ENCODE measurements at regions of chr10 and their contacts with region 1.

Region 1: GRCh38 chr10:4849555-4850242 is 23.7 kb downstream of the AKR1E2 start:
- DNase-seq: peak; percentile 75 to 87 (median 80)
- H3K4me3 ChIP-seq: no peak overlapping the region
- H3K4me3 Mint-ChIP-seq: peak overlapping the region in 4 of 8 donors; percentile 7 to 46 (median 26)
- H3K27ac ChIP-seq: no peak overlapping the region
- H3K27ac Mint-ChIP-seq: peak overlapping the region in 5 of 7 donors; percentile 10 to 84 (median 63)
- H3K4me1 ChIP-seq: peaks cover 4% of the 10 kb centered on the region
- H3K4me1 Mint-ChIP-seq: peaks cover 6 to 9% (median 8%) of the 10 kb centered on the region in 4 donors
- H3K27me3 ChIP-seq: no peaks in the 10 kb centered on the region
- H3K27me3 Mint-ChIP-seq: peaks cover 0 to 2% of the 10 kb centered on the region in 2 donors

Region 2: GRCh38 chr10:4820804-4821401 is 28.8 kb before region 1 on chr10:
- CTCF ChIA-PET with region 1: interaction called, 62 read pairs
- POLR2A ChIA-PET with region 1: interaction called, 3 read pairs
- intact Hi-C with region 1: no loop called
- DNase-seq: no peak
- H3K4me3 ChIP-seq: no peak overlapping the region
- H3K4me3 Mint-ChIP-seq: no peak overlapping the region
- H3K27ac ChIP-seq: no peak overlapping the region
- H3K27ac Mint-ChIP-seq: no peak overlapping the region
- H3K4me1 ChIP-seq: no peaks in the 10 kb centered on the region
- H3K4me1 Mint-ChIP-seq: peaks cover 2 to 4% (median 2%) of the 10 kb centered on the region in 4 donors
- H3K27me3 ChIP-seq: no peaks in the 10 kb centered on the region
- H3K27me3 Mint-ChIP-seq: peaks cover 5 to 24% of the 10 kb centered on the region in 2 donors

Region 3: GRCh38 chr10:4865945-4866661 is 16.4 kb after region 1 on chr10:
- CTCF ChIA-PET with region 1: interaction called, 13 read pairs
- POLR2A ChIA-PET with region 1: no interaction called
- intact Hi-C with region 1: no loop called
- DNase-seq: no peak
- H3K4me3 ChIP-seq: no peak overlapping the region
- H3K4me3 Mint-ChIP-seq: peak overlapping the region in 2 of 8 donors; percentile 15 to 28
- H3K27ac ChIP-seq: no peak overlapping the region
- H3K27ac Mint-ChIP-seq: peak overlapping the region in 1 of 7 donors; percentile 33
- H3K4me1 ChIP-seq: no peaks in the 10 kb centered on the region
- H3K4me1 Mint-ChIP-seq: peaks cover 0 to 6% (median under 1%) of the 10 kb centered on the region in 4 donors
- H3K27me3 ChIP-seq: no peaks in the 10 kb centered on the region
- H3K27me3 Mint-ChIP-seq: peaks cover 0 to 5% of the 10 kb centered on the region in 2 donors

Region 4: DNA sequence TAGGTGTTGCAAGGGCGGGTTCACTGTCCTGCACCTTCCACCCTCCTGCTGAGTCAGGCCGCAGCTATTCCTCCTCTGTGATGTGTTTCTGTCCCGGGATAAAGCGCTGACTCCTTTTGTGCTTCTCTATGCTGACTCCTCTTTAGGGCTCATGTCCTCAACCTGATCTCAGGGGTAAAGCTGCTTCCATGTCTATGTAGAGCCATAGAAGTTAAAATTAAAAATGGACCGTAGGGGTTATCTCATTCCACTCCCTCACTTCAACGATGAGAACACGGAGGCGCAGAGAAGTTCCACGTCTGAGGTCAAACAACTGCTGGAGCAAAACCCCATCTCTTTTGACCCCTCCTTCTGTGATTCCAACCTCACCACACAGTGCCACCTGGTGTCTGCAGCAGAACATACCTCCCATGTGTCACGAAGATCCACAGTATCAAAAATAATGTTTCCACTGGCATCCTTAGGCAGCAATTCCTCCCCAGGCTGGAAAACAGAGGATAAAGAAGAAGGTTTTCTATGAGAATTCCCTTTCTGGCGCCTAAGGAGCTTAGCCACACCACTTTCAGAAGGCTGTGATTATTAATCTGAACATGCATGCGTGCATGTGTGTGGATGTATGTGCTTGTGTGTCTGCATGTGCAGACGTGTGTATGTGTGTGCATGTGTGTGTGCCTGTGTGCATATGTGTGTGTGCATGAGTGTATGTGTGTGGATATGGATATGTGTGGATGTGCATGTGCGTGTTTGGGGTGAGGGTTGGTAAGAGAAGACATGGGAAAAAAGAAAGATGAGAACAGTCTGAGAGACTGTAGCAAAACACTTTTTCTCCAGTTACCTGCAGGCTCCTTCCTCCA is 433.8 kb after region 1 on chr10:
- CTCF ChIA-PET with region 1: interaction called, 59 read pairs
- POLR2A ChIA-PET with region 1: interaction called, 3 read pairs
- intact Hi-C with region 1: loop called (anchors 1 kb)
- DNase-seq: peak; percentile 47 to 64 (median 50)
- H3K4me3 ChIP-seq: no peak overlapping the region
- H3K4me3 Mint-ChIP-seq: peak overlapping the region in 5 of 8 donors; percentile 37 to 68 (median 50)
- H3K27ac ChIP-seq: peak overlapping the region; percentile 23
- H3K27ac Mint-ChIP-seq: peak overlapping the region in 6 of 7 donors; percentile 12 to 91 (median 35)
- H3K4me1 ChIP-seq: peaks cover 21% of the 10 kb centered on the region
- H3K4me1 Mint-ChIP-seq: peaks cover 14 to 35% (median 22%) of the 10 kb centered on the region in 4 donors
- H3K27me3 ChIP-seq: no peaks in the 10 kb centered on the region
- H3K27me3 Mint-ChIP-seq: peaks cover 0 to 7% of the 10 kb centered on the region in 2 donors

Region 5: GRCh38 chr10:5385224-5385623 is 535.5 kb after region 1 on chr10:
- CTCF ChIA-PET with region 1: interaction called, 35 read pairs
- POLR2A ChIA-PET with region 1: no interaction called
- intact Hi-C with region 1: loop called (anchors 1 kb)
- DNase-seq: no peak
- H3K4me3 ChIP-seq: no peak overlapping the region
- H3K4me3 Mint-ChIP-seq: no peak overlapping the region
- H3K27ac ChIP-seq: no peak overlapping the region
- H3K27ac Mint-ChIP-seq: no peak overlapping the region
- H3K4me1 ChIP-seq: no peaks in the 10 kb centered on the region
- H3K4me1 Mint-ChIP-seq: peaks cover 0 to 2% (median 0%) of the 10 kb centered on the region in 4 donors
- H3K27me3 ChIP-seq: no peaks in the 10 kb centered on the region
- H3K27me3 Mint-ChIP-seq: peaks cover 2 to 9% of the 10 kb centered on the region in 2 donors

Measured in CD4-positive, alpha-beta memory T cell (primary cell).